PC-9 (cell line): ENCODE measurements at regions of chr5 and their contacts with region 1.

Region 1: GRCh38 chr5:138725138-138725833 is 27.9 kb upstream of the CTNNA1 start:
- DNase-seq: peak; percentile 94 to 99
- H3K4me3 ChIP-seq: peak overlapping the region; percentile 17; the same call in 1 of the 2 replicates
- H3K27ac ChIP-seq: peak overlapping the region; percentile 74
- H3K4me1 ChIP-seq: peaks cover 55% of the 10 kb centered on the region
- H3K27me3 ChIP-seq: no peaks in the 10 kb centered on the region
- CTCF ChIP-seq: peak; percentile 70

Region 2: GRCh38 chr5:138641547-138642298 is 83.6 kb before region 1 on chr5:
- CTCF ChIA-PET with region 1: interaction called, 7 read pairs
- POLR2A ChIA-PET with region 1: interaction called, 3 read pairs
- intact Hi-C with region 1: loop called (anchors 1 kb)
- DNase-seq: peak; percentile 45 to 80
- H3K4me3 ChIP-seq: no peak overlapping the region
- H3K27ac ChIP-seq: no peak overlapping the region
- H3K4me1 ChIP-seq: no peaks in the 10 kb centered on the region
- H3K27me3 ChIP-seq: no peaks in the 10 kb centered on the region
- CTCF ChIP-seq: peak; percentile 94

Region 3: DNA sequence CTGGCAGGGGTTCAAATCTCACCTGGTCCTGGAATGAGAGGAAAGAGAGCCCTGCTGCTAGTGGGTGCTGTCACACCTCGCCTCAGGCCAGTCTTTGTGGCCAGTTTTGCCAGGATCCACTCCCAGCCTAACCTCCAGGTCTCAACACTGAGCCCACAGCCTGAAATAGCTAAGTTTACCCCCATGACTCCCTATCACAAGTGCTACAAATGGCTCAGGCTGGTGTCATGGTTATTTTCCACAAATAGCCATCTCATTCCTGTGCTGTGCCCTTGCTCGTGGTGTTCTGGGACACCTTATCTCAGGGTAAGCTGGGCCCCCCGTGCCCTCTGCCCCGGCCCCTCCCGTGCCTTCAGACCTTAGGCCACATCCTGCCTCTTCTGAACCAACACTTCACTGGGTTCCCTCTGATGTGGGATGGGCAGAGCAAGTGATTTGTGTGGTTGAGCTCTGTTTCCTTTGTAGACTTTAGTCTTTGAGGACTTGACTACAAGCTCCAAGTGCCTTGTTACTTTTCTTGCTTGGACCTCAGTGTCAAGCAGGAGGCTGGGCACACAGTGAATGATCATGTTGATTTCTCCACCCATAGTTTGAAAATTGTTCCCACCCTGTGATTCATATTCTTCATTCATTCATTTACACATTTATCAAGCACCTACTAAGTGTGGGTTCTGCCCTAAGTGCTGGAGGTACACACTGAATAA is 56.8 kb before region 1 on chr5:
- CTCF ChIA-PET with region 1: interaction called, 3 read pairs
- POLR2A ChIA-PET with region 1: no interaction called
- intact Hi-C with region 1: loop called (anchors 1 kb)
- DNase-seq: no peak
- H3K4me3 ChIP-seq: no peak overlapping the region
- H3K27ac ChIP-seq: peak overlapping the region; percentile 83
- H3K4me1 ChIP-seq: peaks cover 43% of the 10 kb centered on the region
- H3K27me3 ChIP-seq: no peaks in the 10 kb centered on the region
- CTCF ChIP-seq: no peak

Region 4: GRCh38 chr5:138737494-138738265 is 12.4 kb after region 1 on chr5:
- CTCF ChIA-PET with region 1: interaction called, 3 read pairs
- POLR2A ChIA-PET with region 1: interaction called, 3 read pairs
- intact Hi-C with region 1: loop called (anchors 2 kb)
- DNase-seq: peak; percentile 23 to 50
- H3K4me3 ChIP-seq: no peak overlapping the region
- H3K27ac ChIP-seq: no peak overlapping the region
- H3K4me1 ChIP-seq: peaks cover 19% of the 10 kb centered on the region
- H3K27me3 ChIP-seq: no peaks in the 10 kb centered on the region
- CTCF ChIP-seq: no peak

Region 5: DNA sequence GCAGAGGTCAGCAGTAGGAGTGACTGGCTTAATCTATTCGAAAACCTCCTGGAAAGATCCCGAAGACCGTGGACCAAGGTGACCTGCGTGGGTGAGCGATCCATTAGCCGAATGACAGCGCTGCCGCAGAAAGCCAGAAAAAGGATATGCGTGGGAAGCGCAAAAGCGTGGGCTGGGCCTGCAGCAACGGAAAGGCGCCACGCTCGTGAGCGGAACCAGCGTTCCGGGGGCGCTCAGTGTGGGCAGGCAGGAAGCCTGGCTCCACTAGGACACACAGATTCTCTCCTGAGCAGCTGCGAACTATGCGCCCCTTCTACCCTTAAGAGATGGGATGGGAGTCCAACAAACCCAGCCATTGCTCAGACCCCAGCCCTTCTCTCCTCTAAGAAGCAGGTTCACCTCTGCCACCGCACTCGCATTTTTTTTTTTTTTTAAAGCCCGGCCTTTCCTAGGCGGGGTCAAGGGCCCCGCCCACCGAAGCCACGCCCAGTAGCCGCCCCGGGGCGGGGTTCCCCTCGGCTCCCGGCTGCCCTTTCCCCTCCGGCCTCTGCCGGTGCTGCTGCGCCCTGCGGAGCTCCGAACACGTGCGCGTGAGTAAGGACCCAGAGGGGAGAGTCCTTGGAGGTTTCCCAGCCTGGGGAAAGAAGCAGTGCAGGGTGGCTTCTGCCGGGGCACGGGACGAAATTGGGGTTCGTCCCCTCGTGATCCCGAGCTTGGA is 548.4 kb after region 1 on chr5:
- CTCF ChIA-PET with region 1: no interaction called
- POLR2A ChIA-PET with region 1: interaction called, 15 read pairs
- intact Hi-C with region 1: no loop called
- DNase-seq: peak; percentile 80 to 94
- H3K4me3 ChIP-seq: peak overlapping the region; percentile 92
- H3K27ac ChIP-seq: peak overlapping the region; percentile 81
- H3K4me1 ChIP-seq: peaks cover 45% of the 10 kb centered on the region
- H3K27me3 ChIP-seq: no peaks in the 10 kb centered on the region
- CTCF ChIP-seq: no peak